Activated CD4-positive, alpha-beta memory T cell treated with anti-CD3 and anti-CD28 coated beads for 36 hours (primary cell): ENCODE measurements at regions of chr1 and their contacts with region 1.

Region 1: DNA sequence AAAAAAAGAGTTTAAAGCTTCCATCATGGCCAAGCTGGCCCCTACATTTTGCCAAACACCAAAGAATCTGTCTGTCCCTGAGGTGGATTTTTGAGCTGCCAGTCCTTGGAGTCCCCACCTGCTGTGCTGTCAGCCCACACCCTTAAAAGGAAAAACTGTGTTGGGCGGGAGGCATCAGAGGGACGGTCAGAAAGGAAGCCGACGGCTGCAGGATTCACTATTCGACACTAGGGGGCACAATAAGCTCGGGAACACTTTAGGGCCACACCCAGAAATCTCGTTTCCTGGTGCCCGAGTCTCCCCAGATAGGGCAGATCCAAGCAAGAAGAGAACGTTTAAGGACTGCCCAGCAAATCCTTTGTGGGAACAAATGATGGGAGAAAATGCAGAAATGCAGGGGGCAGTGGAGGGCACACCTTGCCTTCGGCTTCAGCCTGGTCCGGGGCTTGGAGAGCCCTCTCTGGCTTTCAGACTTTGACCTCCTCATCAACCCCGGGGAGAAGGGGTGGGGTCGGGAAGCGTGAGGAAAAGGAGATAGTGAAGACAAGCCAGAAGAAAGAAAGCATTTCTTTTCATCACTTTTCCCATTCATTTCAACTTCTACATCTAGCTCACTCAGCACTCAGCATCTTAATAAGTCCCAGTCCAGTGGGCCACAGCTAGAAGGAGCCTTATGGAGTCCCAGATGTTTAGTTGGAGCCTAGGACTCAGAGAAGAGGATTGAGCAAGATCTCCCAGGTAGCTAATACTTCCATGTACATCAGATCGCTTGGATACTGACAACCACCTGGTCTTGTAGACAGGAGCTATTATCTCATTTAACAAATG is 5.0 kb upstream of the CTTNBP2NL start:
- DNase-seq: peak; percentile 89
- H3K4me3 Mint-ChIP-seq: peak overlapping the region; percentile 55
- H3K27ac Mint-ChIP-seq: no peak overlapping the region
- H3K4me1 Mint-ChIP-seq: peaks cover 34% of the 10 kb centered on the region
- H3K27me3 Mint-ChIP-seq: peaks cover 19% of the 10 kb centered on the region

Region 2: DNA sequence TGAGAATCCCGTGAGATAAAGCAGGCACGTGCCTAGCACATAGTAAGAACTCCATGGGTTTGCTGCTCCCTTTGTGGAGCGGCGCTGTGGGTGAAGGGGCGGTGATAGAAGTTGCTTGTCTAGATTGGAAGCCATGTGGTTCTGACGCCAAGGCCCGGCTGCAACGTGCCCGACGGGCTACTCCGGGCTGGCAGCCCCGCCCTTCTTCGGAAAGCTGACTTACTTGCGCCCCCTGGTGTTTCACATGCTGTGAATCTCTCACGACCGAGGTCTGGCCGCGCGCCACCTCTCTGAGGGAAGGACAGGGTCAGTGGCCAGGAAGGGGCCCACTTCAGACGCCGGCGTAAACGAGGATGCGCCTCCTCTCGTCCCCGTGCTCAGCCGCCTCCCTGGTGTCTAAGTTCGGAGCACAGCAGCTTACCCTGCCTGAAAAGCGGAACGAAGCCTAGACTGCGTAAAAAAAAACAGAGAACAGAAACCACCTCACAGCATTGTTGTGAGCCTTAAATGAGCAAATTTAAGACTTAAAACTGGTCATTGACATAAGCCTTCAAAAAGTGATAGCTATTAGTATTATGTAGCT is 75.2 kb after region 1 on chr1:
- CTCF ChIA-PET with region 1: interaction called, 203 read pairs
- POLR2A ChIA-PET with region 1: interaction called, 9 read pairs
- intact Hi-C with region 1: loop called (anchors 1 kb)
- DNase-seq: peak; percentile 91
- H3K4me3 Mint-ChIP-seq: peak overlapping the region; percentile 74
- H3K27ac Mint-ChIP-seq: no peak overlapping the region
- H3K4me1 Mint-ChIP-seq: peaks cover 8% of the 10 kb centered on the region
- H3K27me3 Mint-ChIP-seq: peaks cover 15% of the 10 kb centered on the region

Region 3: GRCh38 chr1:112501810-112502641 is 111.0 kb after region 1 on chr1:
- CTCF ChIA-PET with region 1: interaction called, 21 read pairs
- POLR2A ChIA-PET with region 1: no interaction called
- intact Hi-C with region 1: no loop called
- DNase-seq: peak; percentile 70
- H3K4me3 Mint-ChIP-seq: peak overlapping the region; percentile 10
- H3K27ac Mint-ChIP-seq: no peak overlapping the region
- H3K4me1 Mint-ChIP-seq: peaks cover 6% of the 10 kb centered on the region
- H3K27me3 Mint-ChIP-seq: peaks cover 51% of the 10 kb centered on the region

Region 4: DNA sequence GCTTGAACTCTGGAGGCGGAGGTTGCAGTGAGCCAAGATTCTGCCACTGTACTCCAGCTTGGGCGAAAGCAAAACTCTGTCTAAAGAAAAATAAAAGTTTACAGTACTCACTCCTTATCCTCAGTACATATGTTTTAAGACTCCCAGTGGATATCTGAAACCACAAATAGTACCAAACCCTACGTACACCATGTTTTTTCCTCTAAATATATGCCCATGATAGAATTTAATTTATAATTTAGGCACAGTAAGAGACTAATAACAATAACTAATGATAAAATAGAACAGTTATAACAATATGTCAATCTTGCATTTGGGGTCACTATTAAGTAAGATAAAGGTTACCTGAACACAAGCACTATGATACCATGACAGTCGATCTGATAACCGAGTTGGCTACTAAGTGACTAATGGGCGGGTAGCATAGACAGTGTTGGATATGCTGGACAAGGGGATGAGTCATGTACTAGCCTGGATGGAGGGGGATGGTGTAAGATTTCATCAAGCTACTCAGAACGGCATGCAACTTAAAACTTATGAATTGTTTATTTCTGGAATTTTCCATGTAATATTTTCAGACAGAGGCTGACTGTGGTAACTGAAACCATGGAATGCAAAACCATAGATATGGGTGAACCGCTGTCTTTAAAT is 184.3 kb after region 1 on chr1:
- CTCF ChIA-PET with region 1: no interaction called
- POLR2A ChIA-PET with region 1: no interaction called
- intact Hi-C with region 1: no loop called
- DNase-seq: no peak
- H3K4me3 Mint-ChIP-seq: no peak overlapping the region
- H3K27ac Mint-ChIP-seq: no peak overlapping the region
- H3K4me1 Mint-ChIP-seq: no peaks in the 10 kb centered on the region
- H3K27me3 Mint-ChIP-seq: no peaks in the 10 kb centered on the region

Region 5: GRCh38 chr1:112614460-112615065 is 223.6 kb after region 1 on chr1:
- CTCF ChIA-PET with region 1: interaction called, 21 read pairs
- POLR2A ChIA-PET with region 1: interaction called, 7 read pairs
- intact Hi-C with region 1: loop called (anchors 1 kb)
- DNase-seq: peak; percentile 27
- H3K4me3 Mint-ChIP-seq: no peak overlapping the region
- H3K27ac Mint-ChIP-seq: no peak overlapping the region
- H3K4me1 Mint-ChIP-seq: peaks cover 16% of the 10 kb centered on the region
- H3K27me3 Mint-ChIP-seq: no peaks in the 10 kb centered on the region